ENCODE measurements at regions of chr22 and their contacts with region 1.

Region 1: DNA sequence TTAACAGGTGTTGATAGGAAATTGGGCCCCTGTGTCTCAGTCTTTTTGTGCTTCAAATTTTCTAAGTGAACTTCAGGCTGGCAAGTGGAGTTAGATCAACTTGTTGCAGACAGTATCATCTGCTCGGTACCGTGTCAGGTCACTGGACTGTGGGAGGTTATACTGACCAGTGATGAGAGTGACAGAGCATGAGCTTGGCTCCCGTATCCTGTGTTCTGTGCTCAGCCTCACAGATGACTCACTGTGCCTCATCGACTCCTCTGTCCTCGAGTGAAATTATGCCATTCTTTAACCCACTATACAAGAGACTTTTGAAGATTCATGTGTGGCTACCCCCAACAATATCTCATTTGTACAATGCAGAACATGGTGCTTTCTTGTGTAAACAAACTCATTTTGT is 7.9 kb downstream of the GRAP2 start:
- DNase-seq: peak in 7 of 14 experiments; percentile 24 to 64 (median 59)
- ATAC-seq: peak; percentile 45
- H3K4me3 ChIP-seq: peak overlapping the region; percentile 70
- H3K4me3 Mint-ChIP-seq: peak overlapping the region; percentile 97
- H3K27ac ChIP-seq: peak overlapping the region; percentile 62 to 80
- H3K27ac Mint-ChIP-seq: no peak overlapping the region
- H3K4me1 ChIP-seq: peaks cover 66% of the 10 kb centered on the region
- H3K4me1 Mint-ChIP-seq: peaks cover 90% of the 10 kb centered on the region
- H3K27me3 ChIP-seq: no peaks in the 10 kb centered on the region
- H3K27me3 Mint-ChIP-seq: no peaks in the 10 kb centered on the region
- CTCF ChIP-seq: no peak

Region 2: GRCh38 chr22:39932918-39933649 is 24.3 kb after region 1 on chr22:
- CTCF ChIA-PET with region 1: interaction called, 6 read pairs
- POLR2A ChIA-PET with region 1: interaction called, 393 read pairs
- intact Hi-C with region 1: no loop called
- DNase-seq: peak in 9 of 14 experiments; percentile 38 to 82 (median 57)
- ATAC-seq: peak; percentile 37
- H3K4me3 ChIP-seq: peak overlapping the region; percentile 9
- H3K4me3 Mint-ChIP-seq: peak overlapping the region; percentile 65
- H3K27ac ChIP-seq: peak overlapping the region in 1 of 2 donors; percentile 87
- H3K27ac Mint-ChIP-seq: no peak overlapping the region
- H3K4me1 ChIP-seq: peaks cover 93% of the 10 kb centered on the region
- H3K4me1 Mint-ChIP-seq: peaks cover 55% of the 10 kb centered on the region
- H3K27me3 ChIP-seq: no peaks in the 10 kb centered on the region
- H3K27me3 Mint-ChIP-seq: no peaks in the 10 kb centered on the region
- CTCF ChIP-seq: peak; percentile 66

Measured in CD4-positive, alpha-beta T cell (primary cell).